ENCODE measurements at regions of chr9 and their contacts with region 1.

Region 1: GRCh38 chr9:36873247-36873875 is 160.7 kb downstream of the PAX5 start:
- DNase-seq: peak; percentile 55 to 73
- ATAC-seq: peak; percentile 82 to 90 (median 88)
- H3K4me3 ChIP-seq: no peak overlapping the region
- H3K27ac ChIP-seq: no peak overlapping the region
- H3K4me1 ChIP-seq: no peaks in the 10 kb centered on the region
- H3K27me3 ChIP-seq: no peaks in the 10 kb centered on the region
- CTCF ChIP-seq: peak; percentile 89

Region 2: DNA sequence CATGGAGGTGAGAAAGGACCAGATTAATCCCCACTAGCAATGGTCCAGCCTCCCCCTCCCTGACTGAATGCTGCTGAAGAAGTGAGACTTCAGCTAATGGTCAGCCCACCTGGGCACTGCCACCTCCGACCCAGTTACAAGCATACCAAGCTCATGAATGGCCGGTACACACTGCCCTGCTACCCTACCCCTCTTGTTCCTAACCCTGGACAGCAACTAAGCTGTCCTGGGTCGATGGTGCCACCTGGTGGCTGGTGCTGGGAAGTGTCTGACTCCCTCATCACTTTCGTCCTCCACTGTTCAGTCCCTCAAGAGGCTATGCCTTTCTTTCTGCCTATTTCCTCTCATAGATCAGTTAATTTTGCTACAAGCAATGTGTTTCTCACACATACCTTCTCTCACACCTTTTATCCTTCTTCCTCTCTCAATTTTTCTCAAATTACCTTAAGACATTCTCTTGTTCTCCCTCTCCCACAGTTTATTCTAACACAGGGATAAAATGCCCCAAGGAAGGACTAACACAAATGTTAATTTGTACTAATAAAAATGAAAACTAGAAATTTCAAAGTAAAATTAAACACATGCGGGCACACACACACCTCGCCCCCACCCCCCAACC is 118.3 kb after region 1 on chr9:
- intact Hi-C with region 1: loop called in 1 of 2 experiments (anchors 2 kb)
- DNase-seq: no peak
- ATAC-seq: no peak
- H3K4me3 ChIP-seq: no peak overlapping the region
- H3K27ac ChIP-seq: no peak overlapping the region
- H3K4me1 ChIP-seq: no peaks in the 10 kb centered on the region
- H3K27me3 ChIP-seq: peaks cover 0 to 58% (median 23%) of the 10 kb centered on the region in 3 donors
- CTCF ChIP-seq: peak; percentile 21

Region 3: DNA sequence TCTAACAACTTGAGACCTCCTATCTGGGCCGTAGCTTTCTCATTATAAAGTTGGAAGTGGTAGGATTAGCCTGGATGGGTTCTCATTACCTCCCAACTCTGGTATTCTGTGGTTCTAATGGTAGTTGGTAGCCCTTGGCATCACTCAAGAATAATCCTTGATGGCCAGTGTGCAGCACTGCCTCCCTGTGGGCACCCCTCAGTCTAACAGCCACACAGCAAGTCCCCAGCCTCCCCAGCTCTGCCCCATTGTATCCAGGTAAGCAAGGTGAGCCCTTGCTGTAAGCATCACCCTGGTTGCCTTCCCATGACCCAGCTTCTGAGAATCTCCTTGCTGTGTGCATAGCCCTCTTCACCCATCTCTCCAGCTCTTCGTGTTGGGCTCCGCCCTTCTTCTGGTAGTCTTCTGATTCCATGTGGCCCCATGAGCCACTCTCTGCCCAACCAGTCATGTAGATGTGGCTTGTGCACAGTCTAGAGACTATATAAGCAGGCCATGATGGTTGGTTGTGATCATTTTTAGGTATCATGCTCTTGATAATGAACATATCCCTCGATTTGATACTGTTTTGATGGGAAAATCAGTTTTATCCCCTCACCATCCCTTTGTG is 491.5 kb after region 1 on chr9:
- intact Hi-C with region 1: loop called in 1 of 2 experiments (anchors 10 kb)
- DNase-seq: no peak
- ATAC-seq: no peak
- H3K4me3 ChIP-seq: no peak overlapping the region
- H3K27ac ChIP-seq: no peak overlapping the region
- H3K4me1 ChIP-seq: no peaks in the 10 kb centered on the region
- H3K27me3 ChIP-seq: no peaks in the 10 kb centered on the region
- CTCF ChIP-seq: no peak

Measured in psoas muscle (tissue), 8 donors.